MCF 10A (cell line): ENCODE measurements at regions of chr9 and their contacts with region 1.

Region 1: DNA sequence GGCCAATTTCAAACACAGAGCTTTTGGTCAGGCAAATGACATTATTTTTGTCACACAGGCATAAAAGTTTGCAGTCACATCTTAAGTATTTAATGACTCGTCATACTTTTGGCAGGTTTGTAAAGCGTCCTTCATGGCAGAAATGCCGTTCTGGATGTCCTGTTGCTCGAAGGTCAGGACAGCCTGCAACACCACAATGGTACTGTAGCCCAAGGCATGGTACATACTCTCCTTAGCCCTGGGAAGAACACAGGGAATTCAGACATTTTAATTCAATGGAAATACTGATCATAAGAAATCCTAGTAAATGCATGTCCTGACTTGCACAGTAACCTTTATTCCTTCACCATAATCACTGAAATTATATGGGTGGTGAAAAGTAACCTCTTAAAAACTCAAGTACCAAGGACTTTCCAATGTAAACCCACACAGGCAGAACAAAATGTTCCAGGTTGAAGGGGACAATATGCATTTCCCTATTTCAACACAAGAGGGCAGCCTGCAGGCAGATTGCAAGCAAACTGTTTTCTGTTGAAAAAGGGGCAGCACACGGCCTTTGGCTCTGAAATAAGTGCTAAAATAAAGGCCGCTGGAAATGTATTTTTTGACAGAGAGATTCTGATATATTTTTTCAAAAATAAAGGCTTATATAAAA is 95.7 kb downstream of the TTC39B start:
- DNase-seq: peak; percentile 70
- H3K4me3 Mint-ChIP-seq: no peak overlapping the region
- H3K27ac Mint-ChIP-seq: no peak overlapping the region
- H3K4me1 Mint-ChIP-seq: no peaks in the 10 kb centered on the region
- H3K27me3 Mint-ChIP-seq: no peaks in the 10 kb centered on the region
- CTCF ChIP-seq: peak; percentile 63

Region 2: GRCh38 chr9:15192856-15193255 is 18.4 kb before region 1 on chr9:
- CTCF ChIA-PET with region 1: interaction called, 16 read pairs
- POLR2A ChIA-PET with region 1: no interaction called
- intact Hi-C with region 1: no loop called
- DNase-seq: no peak
- H3K4me3 Mint-ChIP-seq: no peak overlapping the region
- H3K27ac Mint-ChIP-seq: no peak overlapping the region
- H3K4me1 Mint-ChIP-seq: no peaks in the 10 kb centered on the region
- H3K27me3 Mint-ChIP-seq: no peaks in the 10 kb centered on the region
- CTCF ChIP-seq: no peak